ENCODE measurements at regions of chr6 and their contacts with region 1.

Region 1: DNA sequence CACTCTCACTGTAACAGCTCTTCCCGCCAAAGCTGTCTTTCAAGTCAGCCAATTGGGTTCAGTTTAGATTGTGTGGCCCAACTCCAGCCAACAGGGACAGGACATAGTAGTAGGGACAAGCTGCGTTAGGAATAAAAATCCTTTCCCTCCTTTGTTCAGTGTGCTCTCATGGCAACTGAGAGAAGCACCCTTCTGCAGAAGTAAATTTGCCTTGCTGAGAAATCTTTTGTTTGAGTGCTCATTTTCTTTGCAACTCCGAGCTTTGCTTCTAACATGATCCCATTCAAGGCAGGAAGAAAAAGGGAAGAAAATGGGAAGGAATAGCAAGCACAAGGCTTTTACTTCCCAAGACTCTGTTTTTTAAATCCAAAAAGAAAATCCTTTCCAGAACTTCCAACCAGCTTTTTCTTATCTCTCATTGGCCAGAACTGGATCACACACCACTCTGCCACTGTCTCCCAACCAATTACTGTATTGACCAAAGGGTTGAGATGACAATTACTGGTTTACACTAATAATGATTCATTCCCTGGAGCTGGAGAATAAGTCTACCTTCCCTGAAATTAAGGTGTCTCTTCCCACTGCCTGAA is 52.7 kb downstream of the STX11 start:
- DNase-seq: no peak
- ATAC-seq: no peak
- H3K4me3 ChIP-seq: no peak overlapping the region
- H3K27ac ChIP-seq: no peak overlapping the region
- H3K4me1 ChIP-seq: no peaks in the 10 kb centered on the region
- H3K27me3 ChIP-seq: peaks cover 5% of the 10 kb centered on the region
- CTCF ChIP-seq: no peak
- POLR2A ChIP-seq: no peak
- RAD21 ChIP-seq: no peak

Region 2: GRCh38 chr6:143940011-143940597 is 262.9 kb before region 1 on chr6:
- CTCF ChIA-PET with region 1: no interaction called
- POLR2A ChIA-PET with region 1: no interaction called
- dilution Hi-C with region 1: no loop called
- in situ Hi-C with region 1: no loop called
- intact Hi-C with region 1: loop called (anchors 10 kb)
- DNase-seq: peak; percentile 38
- ATAC-seq: peak; percentile 56; the same call in 1 of the 2 replicates
- H3K4me3 ChIP-seq: no peak overlapping the region
- H3K27ac ChIP-seq: no peak overlapping the region
- H3K4me1 ChIP-seq: no peaks in the 10 kb centered on the region
- H3K27me3 ChIP-seq: peaks cover 4% of the 10 kb centered on the region
- CTCF ChIP-seq: peak; percentile 55
- POLR2A ChIP-seq: no peak
- RAD21 ChIP-seq: peak; percentile 53

Region 3: GRCh38 chr6:144119376-144119775 is 83.6 kb before region 1 on chr6:
- CTCF ChIA-PET with region 1: no interaction called
- POLR2A ChIA-PET with region 1: no interaction called
- dilution Hi-C with region 1: no loop called
- in situ Hi-C with region 1: loop called (anchors 10 kb)
- intact Hi-C with region 1: no loop called
- DNase-seq: no peak
- ATAC-seq: no peak
- H3K4me3 ChIP-seq: no peak overlapping the region
- H3K27ac ChIP-seq: no peak overlapping the region
- H3K4me1 ChIP-seq: no peaks in the 10 kb centered on the region
- H3K27me3 ChIP-seq: peaks cover 3% of the 10 kb centered on the region
- CTCF ChIP-seq: no peak
- POLR2A ChIP-seq: no peak
- RAD21 ChIP-seq: no peak

Measured in IMR-90 (cell line).